RWPE1 (cell line): ENCODE measurements at regions of chr3 and their contacts with region 1.

Region 1: DNA sequence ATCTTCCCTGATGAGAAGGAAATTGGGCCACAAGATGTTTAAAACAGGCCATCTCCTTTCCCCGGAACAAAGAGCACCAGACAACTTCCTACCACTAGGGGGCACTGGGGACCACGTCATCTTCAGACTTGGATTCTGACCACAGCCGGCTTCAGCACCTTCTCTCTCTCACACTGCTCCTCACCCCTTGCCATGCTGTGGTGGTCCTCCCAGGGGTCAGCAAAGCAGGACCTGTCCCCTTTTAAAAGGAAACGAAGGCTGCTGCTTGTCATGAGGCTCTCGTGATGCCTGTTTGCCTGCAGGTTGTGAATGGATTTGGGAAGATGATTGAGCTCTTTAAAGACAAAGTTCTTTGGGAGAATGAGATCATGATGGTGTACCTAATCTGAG is 16.2 kb downstream of the RFT1 start:
- DNase-seq: peak; percentile 66
- H3K27ac ChIP-seq: 0 out of 2 replicates have a peak overlapping the region, but pooled peaks have one; percentile 15
- CTCF ChIP-seq: peak; percentile 88

Region 2: GRCh38 chr3:52046186-52046913 is 1067.7 kb before region 1 on chr3:
- CTCF ChIA-PET with region 1: no interaction called
- POLR2A ChIA-PET with region 1: interaction called, 10 read pairs
- DNase-seq: peak; percentile 87
- H3K27ac ChIP-seq: peak overlapping the region; percentile 100
- CTCF ChIP-seq: no peak

Region 3: DNA sequence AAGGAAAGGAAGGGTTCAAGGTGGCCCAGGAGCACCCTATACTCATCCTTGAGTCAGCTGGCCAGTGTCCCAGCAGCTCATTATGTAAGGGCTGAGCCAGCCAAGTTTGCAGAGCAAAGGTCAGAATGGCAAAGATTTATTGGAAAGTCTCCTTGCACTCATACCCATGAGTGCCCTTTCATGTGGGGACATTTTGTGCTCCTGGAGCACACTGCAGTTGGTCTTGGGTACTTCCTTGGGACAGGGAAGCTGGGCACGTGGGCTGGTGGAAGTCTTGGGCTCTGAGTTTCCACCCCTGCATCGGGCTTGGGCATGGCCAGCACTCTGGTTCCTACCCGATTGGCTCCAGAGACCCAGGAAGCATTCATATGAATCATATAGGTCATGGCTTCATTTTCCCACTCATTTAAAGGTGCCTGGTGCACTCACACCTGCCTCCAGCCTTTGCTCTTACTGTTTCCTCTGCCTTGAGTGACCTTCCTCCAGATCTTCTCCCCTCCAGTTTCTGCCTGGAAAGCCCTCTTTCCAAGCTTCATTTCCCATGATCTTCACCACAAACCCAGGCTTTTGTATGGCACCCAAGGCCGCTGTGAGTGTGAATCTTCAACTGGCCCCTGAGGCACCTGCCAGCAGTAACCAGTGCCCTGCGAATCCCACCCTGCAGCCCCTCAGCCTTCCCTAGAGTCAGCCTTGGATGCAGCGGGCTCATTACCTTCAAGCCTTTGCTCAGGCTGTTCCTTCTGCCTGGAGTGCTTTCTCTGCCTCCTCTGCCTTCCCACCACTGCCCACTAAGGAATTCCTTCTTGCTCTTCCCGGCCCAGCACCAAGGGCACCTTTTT is 36.5 kb after region 1 on chr3:
- CTCF ChIA-PET with region 1: no interaction called
- POLR2A ChIA-PET with region 1: no interaction called
- DNase-seq: peak; percentile 27
- H3K27ac ChIP-seq: peak overlapping the region; percentile 72
- CTCF ChIP-seq: no peak

Region 4: DNA sequence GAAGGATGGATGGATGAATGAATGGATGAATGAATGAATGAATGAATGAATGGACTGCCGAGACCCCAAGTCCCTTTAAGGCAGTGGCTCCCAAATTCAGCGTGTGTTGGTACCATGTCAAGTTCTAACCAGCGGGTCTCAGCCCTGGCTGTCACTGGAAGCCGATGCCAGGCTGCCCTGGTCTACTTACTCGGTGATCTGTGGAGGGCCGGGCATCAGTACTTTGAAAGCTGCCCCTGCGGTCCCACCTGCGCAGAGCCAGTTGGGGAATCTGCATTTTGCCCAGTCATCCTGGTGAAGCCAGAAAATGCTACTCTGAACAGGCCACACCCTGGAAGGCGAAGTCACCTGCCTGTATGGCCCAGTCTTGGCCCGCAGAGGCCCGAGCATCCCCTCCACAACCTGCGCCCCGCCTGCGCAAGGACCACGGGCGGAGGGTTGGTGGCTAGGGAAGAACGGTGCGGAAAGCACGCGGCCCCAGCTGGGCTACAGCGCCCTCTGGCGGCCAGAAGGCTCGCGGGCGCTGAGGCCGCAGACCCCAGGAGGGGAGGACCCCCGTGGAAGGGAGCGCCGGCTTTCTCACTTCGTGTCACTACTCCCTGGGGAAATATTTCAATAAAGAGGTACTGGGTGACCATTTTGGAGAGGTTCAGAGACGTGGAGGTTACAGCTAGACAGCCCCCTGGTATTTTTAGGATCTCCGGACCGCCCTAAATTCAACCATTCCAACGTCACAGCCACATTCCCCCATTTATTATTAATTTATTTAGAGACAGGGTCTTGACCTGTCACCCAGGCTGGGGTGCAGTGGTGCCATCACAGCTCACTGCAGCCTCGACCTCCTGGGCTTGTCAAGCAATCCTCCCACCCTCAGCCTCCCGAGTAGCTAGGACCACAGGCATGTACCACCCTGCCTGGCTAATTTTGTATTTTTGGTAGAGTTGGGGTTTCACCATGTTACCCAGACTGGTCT is 81.9 kb after region 1 on chr3:
- CTCF ChIA-PET with region 1: interaction called, 11 read pairs
- POLR2A ChIA-PET with region 1: no interaction called
- DNase-seq: peak; percentile 45
- H3K27ac ChIP-seq: no peak overlapping the region
- CTCF ChIP-seq: peak; percentile 96